ENCODE measurements at regions of chr20 and their contacts with region 1.

Region 1: DNA sequence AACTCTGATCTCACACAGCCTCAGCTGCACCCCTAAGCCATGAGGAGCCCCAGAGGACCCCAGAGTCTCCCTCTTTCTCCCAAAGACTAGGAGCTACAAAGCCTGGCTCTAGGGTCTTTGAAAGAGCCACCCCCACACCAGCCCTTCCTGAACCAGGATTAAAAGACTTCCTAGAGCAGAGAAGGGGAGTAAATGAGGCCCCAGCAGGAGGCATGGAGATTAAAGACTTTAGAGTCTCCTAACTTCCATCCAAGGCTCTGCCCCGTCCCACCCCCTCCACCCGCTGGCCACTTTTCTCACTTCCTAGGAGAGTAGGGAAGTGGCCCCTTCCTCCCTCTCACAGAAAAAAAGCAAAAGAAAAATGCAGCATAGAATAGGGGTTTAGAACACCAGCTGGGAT is 1.7 kb downstream of the PREX1 start:
- DNase-seq: no peak
- H3K4me3 ChIP-seq: no peak overlapping the region
- H3K27ac ChIP-seq: no peak overlapping the region
- H3K4me1 ChIP-seq: peaks cover 33% of the 10 kb centered on the region
- H3K27me3 ChIP-seq: no peaks in the 10 kb centered on the region
- CTCF ChIP-seq: no peak

Region 2: GRCh38 chr20:48041045-48041780 is 784.9 kb before region 1 on chr20:
- CTCF ChIA-PET with region 1: no interaction called
- POLR2A ChIA-PET with region 1: no interaction called
- intact Hi-C with region 1: no loop called
- DNase-seq: no peak
- H3K4me3 ChIP-seq: no peak overlapping the region
- H3K27ac ChIP-seq: no peak overlapping the region
- H3K4me1 ChIP-seq: peaks cover under 1% of the 10 kb centered on the region; the same call in 1 of the 2 replicates
- H3K27me3 ChIP-seq: no peaks in the 10 kb centered on the region
- CTCF ChIP-seq: no peak

Region 3: DNA sequence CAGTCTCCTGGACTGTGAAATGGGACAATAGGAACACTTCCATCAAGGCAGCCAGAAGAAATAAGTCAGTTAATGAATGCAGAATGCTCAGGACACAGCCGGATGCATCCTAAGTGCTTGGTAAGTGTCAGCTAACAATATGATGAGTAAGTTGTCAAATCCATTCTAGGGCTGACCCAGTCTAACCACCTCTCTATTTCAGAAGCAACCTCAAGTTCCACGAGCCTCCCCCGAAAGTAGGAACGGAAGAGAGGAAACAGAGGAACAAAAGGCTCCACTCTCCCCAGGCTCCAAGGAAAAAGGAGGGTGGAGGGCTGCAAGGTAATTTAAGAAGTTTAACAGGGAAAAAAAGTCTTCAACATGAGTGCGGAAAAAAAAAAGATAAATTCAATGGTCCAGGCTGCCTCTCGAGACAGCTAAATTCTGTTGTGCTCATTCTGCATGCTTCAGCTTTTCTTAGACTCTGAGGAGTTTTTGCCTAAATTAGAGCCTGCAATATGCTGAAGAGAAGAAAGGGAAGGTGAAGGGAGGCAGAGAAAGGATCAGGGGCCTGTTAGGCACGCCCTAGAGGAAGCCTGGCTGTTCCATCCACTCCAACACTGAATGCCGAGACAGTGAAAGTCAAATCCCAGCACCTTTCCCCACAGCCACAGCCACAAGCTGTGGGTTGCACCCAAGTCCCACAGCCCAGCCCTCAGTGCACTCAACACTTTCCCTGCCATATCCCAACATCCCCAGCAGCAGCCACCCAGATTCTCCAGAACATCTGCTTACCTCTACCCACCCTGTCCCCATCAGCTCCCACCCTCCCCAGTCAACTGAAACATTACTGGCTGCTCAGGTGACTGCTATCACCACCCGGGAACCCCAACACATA is 35.7 kb before region 1 on chr20:
- CTCF ChIA-PET with region 1: no interaction called
- POLR2A ChIA-PET with region 1: interaction called, 10 read pairs
- intact Hi-C with region 1: no loop called
- DNase-seq: no peak
- H3K4me3 ChIP-seq: no peak overlapping the region
- H3K27ac ChIP-seq: no peak overlapping the region
- H3K4me1 ChIP-seq: 0 out of 2 replicates have a peak, but pooled peaks cover 3% of the 10 kb centered on the region
- H3K27me3 ChIP-seq: 0 out of 2 replicates have a peak, but pooled peaks cover 6% of the 10 kb centered on the region
- CTCF ChIP-seq: no peak

Region 4: GRCh38 chr20:48945851-48946514 is 119.9 kb after region 1 on chr20:
- CTCF ChIA-PET with region 1: no interaction called
- POLR2A ChIA-PET with region 1: no interaction called
- intact Hi-C with region 1: no loop called
- DNase-seq: peak; percentile 95 to 99
- H3K4me3 ChIP-seq: peak overlapping the region; percentile 49; the same call in 1 of the 2 replicates
- H3K27ac ChIP-seq: peak overlapping the region; percentile 86
- H3K4me1 ChIP-seq: peaks cover 36% of the 10 kb centered on the region
- H3K27me3 ChIP-seq: no peaks in the 10 kb centered on the region
- CTCF ChIP-seq: no peak